ENCODE measurements at regions of chr6 and their contacts with region 1.

Region 1: GRCh38 chr6:41066867-41067304 is 5.3 kb downstream of the OARD1 start:
- DNase-seq: peak; percentile 52 to 57
- H3K4me3 ChIP-seq: no peak overlapping the region
- H3K27ac ChIP-seq: no peak overlapping the region
- H3K4me1 ChIP-seq: peaks cover 12% of the 10 kb centered on the region
- H3K27me3 ChIP-seq: no peaks in the 10 kb centered on the region
- CTCF ChIP-seq: peak; percentile 92

Region 2: DNA sequence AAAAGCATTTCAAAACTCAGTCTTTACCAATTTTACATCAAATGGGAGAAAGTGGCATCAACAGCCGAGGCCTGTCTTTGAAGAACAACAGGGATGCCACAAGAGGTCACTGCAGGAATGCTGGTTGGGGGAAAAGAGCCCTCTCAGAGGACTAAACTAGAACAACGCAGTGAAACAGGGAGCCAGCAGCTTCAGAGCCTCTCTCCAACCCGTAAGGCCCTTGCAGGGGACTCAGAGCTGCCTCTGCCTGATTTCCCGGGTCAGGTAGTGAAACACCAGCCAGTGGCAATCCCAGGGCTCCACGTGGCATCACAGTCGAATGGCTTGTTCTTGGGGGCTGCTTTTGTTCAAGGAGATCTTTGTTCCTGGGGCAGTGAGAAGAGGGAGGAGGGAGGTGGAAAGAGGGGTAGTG is 1689.3 kb before region 1 on chr6:
- CTCF ChIA-PET with region 1: no interaction called
- POLR2A ChIA-PET with region 1: no interaction called
- intact Hi-C with region 1: loop called (anchors 10 kb)
- DNase-seq: peak in 1 of 2 experiments; percentile 46
- H3K4me3 ChIP-seq: no peak overlapping the region
- H3K27ac ChIP-seq: no peak overlapping the region
- H3K4me1 ChIP-seq: no peaks in the 10 kb centered on the region
- H3K27me3 ChIP-seq: peaks cover 57% of the 10 kb centered on the region
- CTCF ChIP-seq: peak; percentile 63

Region 3: GRCh38 chr6:40328405-40328987 is 738.4 kb before region 1 on chr6:
- CTCF ChIA-PET with region 1: no interaction called
- POLR2A ChIA-PET with region 1: no interaction called
- intact Hi-C with region 1: loop called (anchors 10 kb)
- DNase-seq: peak in 1 of 2 experiments; percentile 51
- H3K4me3 ChIP-seq: no peak overlapping the region
- H3K27ac ChIP-seq: no peak overlapping the region
- H3K4me1 ChIP-seq: no peaks in the 10 kb centered on the region
- H3K27me3 ChIP-seq: peaks cover 21% of the 10 kb centered on the region
- CTCF ChIP-seq: peak; percentile 77

Region 4: DNA sequence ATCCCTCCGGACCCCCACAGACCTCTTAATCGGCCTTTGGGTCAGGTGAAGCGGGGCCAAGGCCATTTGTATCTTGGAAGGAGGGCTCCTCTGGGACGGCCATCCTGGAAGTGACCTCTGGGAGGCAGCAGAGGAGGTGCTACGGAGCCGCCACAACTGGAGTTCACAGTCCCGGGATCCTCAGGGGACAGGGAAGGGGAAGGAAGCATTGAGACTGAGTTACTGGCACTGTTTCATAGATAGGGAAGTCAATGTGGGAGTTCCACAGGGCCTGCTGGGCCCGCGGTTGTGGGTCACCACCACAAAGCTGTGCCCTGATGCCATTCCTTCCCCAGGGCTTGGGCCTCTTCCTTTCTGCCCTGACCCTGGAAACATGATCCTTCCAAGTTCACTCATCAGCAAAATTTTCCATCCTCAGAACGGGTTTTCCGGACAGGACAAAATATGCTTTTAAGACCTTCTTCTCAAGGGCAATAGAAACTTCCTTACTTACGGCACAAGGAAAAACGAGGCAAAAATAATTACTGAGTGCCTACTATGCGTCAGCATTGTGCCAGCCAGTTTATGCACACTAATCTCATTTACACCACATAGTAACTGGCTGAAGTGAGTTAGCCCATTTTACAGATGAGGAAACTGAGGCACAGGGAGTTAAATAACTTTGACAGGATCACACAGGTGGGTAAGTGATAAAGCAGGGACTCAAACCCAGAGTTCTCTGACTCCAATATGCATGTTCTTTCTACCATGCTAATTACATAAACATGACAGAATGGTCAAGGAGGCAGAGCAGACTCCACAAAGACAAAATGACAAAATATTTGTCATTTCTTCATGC is 171.7 kb before region 1 on chr6:
- CTCF ChIA-PET with region 1: no interaction called
- POLR2A ChIA-PET with region 1: no interaction called
- intact Hi-C with region 1: loop called (anchors 2 kb)
- DNase-seq: peak in 1 of 2 experiments; percentile 58
- H3K4me3 ChIP-seq: no peak overlapping the region
- H3K27ac ChIP-seq: no peak overlapping the region
- H3K4me1 ChIP-seq: no peaks in the 10 kb centered on the region
- H3K27me3 ChIP-seq: peaks cover 44% of the 10 kb centered on the region
- CTCF ChIP-seq: peak; percentile 74

Region 5: DNA sequence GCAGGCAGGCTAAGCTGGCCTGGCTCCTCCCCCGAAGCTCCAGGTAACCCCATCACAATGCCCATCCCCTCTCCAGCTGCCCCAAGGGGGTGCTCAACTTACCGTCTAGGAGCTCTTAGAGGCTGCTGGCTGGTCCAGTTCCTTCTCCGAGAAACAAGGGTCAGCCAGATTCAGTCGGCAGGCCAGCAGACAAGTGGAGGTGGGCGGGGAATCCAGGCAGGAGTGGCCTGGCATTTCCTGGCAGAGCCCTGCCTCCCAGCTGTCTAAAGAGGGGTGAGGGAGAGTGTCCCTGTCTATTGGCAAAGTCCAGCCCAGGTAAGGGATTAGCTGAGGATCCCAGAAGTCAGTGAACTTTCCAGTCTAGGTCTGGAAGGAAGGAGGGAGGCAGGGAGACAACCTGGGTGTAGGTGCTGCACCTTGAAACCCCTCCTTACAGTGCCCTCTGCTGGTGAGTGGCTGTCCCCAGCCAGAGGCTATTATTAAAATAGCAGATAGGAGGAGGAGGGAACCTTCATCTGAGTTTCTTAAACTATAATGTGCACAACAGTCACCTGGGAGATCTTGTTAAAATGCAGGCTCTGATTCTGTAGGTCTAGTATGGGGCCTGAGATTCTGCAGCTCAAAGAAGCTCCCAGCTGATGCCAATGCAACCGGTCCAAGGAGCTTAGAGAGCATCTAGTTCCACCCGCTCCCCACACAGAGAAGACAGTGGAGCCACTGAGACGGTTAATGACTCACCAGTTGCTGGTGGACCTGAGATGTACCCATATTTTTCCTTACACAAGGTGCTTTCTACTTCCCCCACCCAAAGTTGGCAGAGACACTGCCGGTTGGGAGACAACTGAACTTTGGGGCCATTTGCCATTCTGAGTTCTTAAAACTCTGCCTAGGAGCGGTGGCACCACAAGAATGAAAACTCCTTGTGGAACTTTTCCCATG is 27.6 kb before region 1 on chr6 and contains the start of gene UNC5CL:
- CTCF ChIA-PET with region 1: interaction called, 5 read pairs
- POLR2A ChIA-PET with region 1: no interaction called
- intact Hi-C with region 1: loop called (anchors 2 kb)
- DNase-seq: peak; percentile 43 to 67
- H3K4me3 ChIP-seq: no peak within 1 kb of the TSS
- H3K27ac ChIP-seq: no peak within 1 kb of the TSS
- H3K4me1 ChIP-seq: peaks cover 20% of the 10 kb centered on the region
- H3K27me3 ChIP-seq: no peaks in the 10 kb centered on the region
- CTCF ChIP-seq: peak; percentile 80
- total RNA-seq, gene UNC5CL: 1.7 and 2.1 TPM in 2 replicates